Panc1 (cell line): ENCODE measurements at regions of chr12 and their contacts with region 1.

Region 1: DNA sequence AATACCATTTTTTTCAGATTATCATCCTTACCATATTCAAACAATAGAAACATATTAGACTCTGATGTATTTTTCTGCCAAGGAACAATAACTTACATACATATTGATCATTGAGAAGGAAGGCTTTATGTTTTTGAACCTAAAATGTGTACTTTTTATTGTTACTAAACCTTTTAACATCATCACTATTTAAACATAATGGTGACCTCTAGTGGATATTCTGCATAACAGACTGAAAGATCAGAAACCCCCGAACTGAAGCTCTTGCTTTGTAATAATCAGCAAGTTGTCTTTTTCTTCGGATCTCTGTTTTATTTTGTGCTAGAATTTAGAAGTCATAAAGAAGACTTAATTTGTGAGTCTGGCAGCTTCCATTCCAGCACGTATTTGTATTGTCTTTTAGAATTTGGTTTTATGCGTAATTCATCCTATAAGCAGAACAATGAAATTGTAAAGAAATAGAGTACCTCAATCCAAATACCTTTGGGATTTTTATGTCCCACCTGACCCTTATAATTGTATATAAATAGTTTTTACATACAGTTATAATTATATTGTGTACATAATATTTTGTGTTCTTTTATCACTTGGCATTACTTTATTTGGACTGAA is 125.9 kb upstream of the ATF1 start:
- DNase-seq: no peak
- ATAC-seq: 0 out of 2 replicates have a peak, but pooled peaks have one; percentile 64
- H3K4me3 ChIP-seq: no peak overlapping the region
- H3K27ac ChIP-seq: no peak overlapping the region
- H3K4me1 ChIP-seq: peaks cover 10% of the 10 kb centered on the region
- H3K27me3 ChIP-seq: no peaks in the 10 kb centered on the region
- CTCF ChIP-seq: peak; percentile 65; the same call in 1 of the 2 replicates

Region 2: DNA sequence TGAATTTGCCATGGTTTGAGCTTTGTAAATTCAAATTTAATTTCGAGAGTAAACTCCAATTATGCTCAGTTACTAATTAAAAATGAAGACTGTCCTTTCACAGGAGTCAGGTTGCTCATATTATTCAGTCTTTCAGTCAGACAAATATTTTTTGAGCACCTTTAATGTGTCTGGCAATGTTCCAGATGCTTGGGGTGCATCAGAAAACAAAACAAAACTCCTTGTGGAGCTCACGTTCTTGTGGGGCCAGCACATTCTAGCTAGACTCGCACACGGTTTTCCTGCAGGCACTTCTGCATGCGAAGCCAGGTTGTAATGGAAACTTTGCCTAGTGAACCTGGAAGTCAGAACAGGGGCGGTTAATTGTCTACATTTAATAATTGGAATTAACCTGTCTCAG is 62.0 kb after region 1 on chr12:
- CTCF ChIA-PET with region 1: no interaction called
- POLR2A ChIA-PET with region 1: interaction called, 15 read pairs
- in situ Hi-C with region 1: no loop called
- intact Hi-C with region 1: no loop called
- DNase-seq: no peak
- ATAC-seq: no peak
- H3K4me3 ChIP-seq: no peak overlapping the region
- H3K27ac ChIP-seq: no peak overlapping the region
- H3K4me1 ChIP-seq: no peaks in the 10 kb centered on the region
- H3K27me3 ChIP-seq: no peaks in the 10 kb centered on the region
- CTCF ChIP-seq: no peak